Activated CD4-positive, alpha-beta T cell treated with anti-CD3 and anti-CD28 coated beads, Interleukin-2, amount 10 ng/mL, durations not matched to agents 24 days and 14 days (primary cell): ENCODE measurements at regions of chr11 and their contacts with region 1.

Region 1: DNA sequence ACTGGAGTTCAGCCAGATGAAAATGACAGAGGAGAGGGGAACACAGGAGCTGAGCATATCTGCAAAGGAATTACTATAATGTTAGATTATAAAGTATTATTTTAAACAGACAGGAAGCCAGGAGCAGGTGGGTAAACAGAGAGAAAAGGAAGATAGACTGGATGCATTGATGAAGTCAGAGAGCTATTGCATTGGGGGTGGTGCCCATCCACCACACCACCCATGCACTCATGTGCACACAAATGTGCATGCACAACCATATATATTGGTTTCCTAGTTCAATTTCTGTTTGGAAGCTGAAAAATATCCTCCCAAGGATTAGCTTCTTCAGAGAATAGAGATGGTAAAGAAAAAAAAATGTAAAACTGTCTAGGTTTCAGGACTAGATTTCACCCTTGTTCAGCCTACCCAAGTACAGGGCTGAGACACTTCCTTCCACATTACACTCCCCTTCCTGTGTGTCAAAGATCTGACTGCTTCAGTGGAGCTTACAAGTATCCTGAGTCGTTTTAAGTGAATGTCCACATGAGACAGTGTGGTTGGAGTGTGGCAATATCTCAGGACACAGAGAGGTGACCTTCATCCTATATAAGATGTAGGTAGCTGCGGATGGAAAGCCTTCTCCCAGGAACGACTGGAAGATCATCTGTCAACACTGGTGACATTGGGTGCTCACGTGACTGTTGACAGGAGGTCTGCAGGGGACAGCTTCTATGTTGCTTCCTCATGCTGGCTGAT is 12.2 kb upstream of the SMPD1 start:
- DNase-seq: peak; percentile 66
- H3K4me3 Mint-ChIP-seq: peak overlapping the region; percentile 2
- H3K27ac Mint-ChIP-seq: peak overlapping the region; percentile 10
- H3K4me1 Mint-ChIP-seq: peaks cover 29% of the 10 kb centered on the region
- H3K27me3 Mint-ChIP-seq: no peaks in the 10 kb centered on the region

Region 2: DNA sequence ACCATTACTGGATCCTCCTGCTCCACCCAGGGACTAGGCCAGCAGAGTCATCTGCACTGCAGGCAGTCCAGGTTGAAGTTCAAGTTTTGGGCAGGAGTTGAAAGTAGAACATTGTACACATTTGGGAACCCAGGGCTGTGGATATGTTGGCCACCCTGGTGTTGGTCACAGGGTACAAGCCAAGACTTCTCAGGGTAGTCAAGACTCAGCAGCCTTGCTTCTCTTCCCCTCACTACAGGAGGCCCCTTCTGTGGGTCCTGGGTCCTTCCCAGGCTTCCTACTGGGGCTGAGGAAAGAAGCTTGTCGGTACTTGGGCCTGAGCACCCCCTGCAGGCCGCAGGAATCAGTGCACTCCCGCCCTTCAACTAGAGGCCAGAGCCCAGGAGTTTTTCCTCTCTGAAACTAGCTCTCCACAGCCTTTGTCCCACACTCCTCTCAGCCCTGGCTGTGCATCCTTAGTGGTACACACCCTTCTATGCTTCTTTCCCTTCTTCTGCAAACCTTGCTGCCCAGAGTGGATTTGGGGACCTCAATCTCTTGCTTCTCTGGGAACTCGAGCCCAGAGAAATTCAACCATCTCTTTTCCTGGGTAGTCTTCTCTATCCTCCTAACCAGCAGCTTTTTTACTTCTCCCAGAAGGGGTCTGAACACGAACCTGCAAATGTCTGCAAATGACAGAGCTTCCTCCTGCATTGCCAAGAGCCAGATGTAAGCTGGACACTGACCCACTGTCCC is 65.4 kb after region 1 on chr11:
- intact Hi-C with region 1: loop called (anchors 1 kb)
- DNase-seq: peak; percentile 87
- H3K4me3 Mint-ChIP-seq: no peak overlapping the region
- H3K27ac Mint-ChIP-seq: no peak overlapping the region
- H3K4me1 Mint-ChIP-seq: no peaks in the 10 kb centered on the region
- H3K27me3 Mint-ChIP-seq: peaks cover 11% of the 10 kb centered on the region

Region 3: DNA sequence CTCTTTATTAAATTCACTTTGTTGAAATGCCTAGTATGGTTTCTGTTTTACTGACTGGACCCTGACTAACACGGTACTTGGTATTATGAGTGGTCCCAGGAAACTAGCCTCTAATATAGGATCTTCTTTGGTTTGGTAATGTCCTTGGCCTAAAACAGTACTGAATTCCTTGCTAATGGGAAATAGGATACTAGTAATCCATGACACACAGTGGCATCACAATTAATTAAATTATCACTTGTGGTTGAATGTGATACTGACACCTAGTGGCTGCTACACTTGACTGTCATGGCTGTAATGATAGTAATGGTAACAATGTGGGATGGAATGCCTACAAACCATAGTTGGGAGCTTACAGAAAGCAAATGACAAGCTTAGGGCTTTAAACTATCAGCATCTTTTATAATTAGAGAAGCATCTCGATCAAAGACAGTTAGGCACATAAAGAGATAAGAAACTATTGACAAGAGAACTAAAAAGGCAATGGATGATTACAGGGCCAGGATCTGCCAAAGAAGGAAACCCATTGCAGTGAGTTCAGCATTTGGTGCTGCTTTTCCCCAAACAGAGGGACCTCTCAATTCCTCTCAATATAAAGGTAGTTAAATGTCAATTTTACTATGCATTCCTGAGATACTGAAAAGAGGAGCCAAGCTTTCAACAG is 127.6 kb after region 1 on chr11:
- intact Hi-C with region 1: loop called (anchors 1 kb)
- DNase-seq: peak; percentile 70
- H3K4me3 Mint-ChIP-seq: no peak overlapping the region
- H3K27ac Mint-ChIP-seq: no peak overlapping the region
- H3K4me1 Mint-ChIP-seq: peaks cover 6% of the 10 kb centered on the region
- H3K27me3 Mint-ChIP-seq: no peaks in the 10 kb centered on the region

Region 4: DNA sequence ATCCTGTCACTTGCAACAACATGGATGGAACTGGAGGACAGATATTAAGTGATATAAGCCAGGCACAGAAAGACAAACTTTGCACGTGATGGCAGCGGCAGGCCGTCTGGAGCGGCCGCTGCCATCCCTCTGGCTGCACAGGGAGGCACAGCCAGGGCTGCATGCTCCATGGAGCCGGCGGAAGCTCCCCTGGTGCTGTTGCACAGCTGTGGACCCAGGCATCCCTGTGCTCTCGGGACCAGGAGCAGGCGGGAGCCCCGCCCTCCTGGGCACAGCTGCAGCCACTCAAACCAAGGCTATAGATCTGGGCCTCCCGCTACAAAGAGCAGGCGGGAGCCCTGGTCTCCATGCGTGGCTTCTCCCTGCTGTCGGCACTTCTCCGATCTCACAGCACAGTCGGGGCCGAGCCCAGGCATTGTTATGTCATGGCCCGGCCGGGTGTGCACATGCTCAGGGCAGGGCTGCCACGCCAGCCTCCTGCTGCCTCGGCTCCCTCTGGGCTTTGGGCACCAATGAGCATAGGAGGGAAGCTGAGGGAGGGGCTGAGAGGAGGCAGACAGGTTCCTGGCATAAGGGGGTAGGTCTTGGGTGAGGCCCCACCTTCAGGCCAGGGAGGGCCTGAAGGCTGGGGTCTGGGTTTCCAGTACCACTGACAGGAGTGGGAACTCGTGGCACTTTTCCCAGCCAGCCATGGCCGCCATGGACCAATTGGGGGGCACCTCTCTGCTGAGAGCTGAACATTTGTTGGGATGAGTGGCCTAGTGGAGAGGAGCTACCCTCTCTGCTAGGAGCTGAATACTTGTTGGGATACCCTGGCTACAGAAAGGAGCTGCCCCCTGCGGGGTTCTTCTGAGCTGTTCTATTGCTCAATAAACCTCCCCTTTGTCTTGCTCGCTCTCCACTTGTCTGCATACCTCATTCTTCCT is 208.6 kb after region 1 on chr11:
- intact Hi-C with region 1: no loop called
- DNase-seq: peak; percentile 53
- H3K4me3 Mint-ChIP-seq: no peak overlapping the region
- H3K27ac Mint-ChIP-seq: no peak overlapping the region
- H3K4me1 Mint-ChIP-seq: no peaks in the 10 kb centered on the region
- H3K27me3 Mint-ChIP-seq: no peaks in the 10 kb centered on the region